ENCODE measurements at regions of chr14 and their contacts with region 1.

Region 1: GRCh38 chr14:103104654-103105452 is 10.3 kb downstream of the EXOC3L4 start:
- DNase-seq: peak; percentile 64
- H3K4me3 ChIP-seq: no peak overlapping the region
- H3K27ac ChIP-seq: no peak overlapping the region
- H3K4me1 ChIP-seq: peaks cover 12% of the 10 kb centered on the region
- H3K27me3 ChIP-seq: peaks cover 30% of the 10 kb centered on the region
- CTCF ChIP-seq: peak; percentile 100

Region 2: DNA sequence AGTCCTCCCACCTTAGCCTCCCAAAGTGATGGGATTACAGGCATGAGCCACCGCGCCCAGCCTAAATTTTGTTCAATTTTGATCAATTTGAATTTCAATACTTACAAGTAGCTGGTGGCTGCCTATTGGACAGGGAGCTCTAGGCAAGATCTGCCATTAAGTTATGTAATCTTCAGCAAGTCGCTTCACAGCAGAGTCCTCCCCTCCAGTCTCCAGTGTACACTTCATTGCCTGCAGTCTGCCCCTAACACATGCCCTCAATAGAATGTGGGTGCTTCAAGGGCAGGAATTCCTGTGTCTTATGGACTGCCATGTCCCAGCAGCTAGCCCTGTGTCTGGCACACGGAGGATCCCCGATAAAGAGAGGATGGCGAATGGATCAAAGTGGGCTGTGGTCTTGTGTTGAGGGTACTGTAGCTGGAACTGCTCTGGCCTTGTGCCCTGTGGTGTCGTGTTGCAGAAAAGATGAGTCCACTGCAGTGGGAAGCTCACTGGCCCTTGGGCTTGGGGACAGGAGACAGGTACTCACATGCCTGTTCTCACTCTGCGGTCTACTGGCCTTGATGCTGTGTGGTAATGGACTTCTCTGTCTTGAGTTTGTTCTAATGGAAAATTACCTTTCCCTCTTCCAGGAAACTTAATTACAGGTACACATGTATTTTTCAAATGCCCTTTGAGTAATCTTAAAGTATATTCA is 674.5 kb before region 1 on chr14:
- CTCF ChIA-PET with region 1: no interaction called
- POLR2A ChIA-PET with region 1: no interaction called
- intact Hi-C with region 1: no loop called
- DNase-seq: no peak
- H3K4me3 ChIP-seq: no peak overlapping the region
- H3K27ac ChIP-seq: no peak overlapping the region
- H3K4me1 ChIP-seq: no peaks in the 10 kb centered on the region
- H3K27me3 ChIP-seq: no peaks in the 10 kb centered on the region
- CTCF ChIP-seq: no peak

Region 3: GRCh38 chr14:103056322-103057027 is 48.4 kb before region 1 on chr14:
- CTCF ChIA-PET with region 1: no interaction called
- POLR2A ChIA-PET with region 1: interaction called, 12 read pairs
- intact Hi-C with region 1: no loop called
- DNase-seq: peak; percentile 92
- H3K4me3 ChIP-seq: peak overlapping the region; percentile 84
- H3K27ac ChIP-seq: peak overlapping the region; percentile 82
- H3K4me1 ChIP-seq: peaks cover 24% of the 10 kb centered on the region
- H3K27me3 ChIP-seq: no peaks in the 10 kb centered on the region
- CTCF ChIP-seq: no peak

Region 4: DNA sequence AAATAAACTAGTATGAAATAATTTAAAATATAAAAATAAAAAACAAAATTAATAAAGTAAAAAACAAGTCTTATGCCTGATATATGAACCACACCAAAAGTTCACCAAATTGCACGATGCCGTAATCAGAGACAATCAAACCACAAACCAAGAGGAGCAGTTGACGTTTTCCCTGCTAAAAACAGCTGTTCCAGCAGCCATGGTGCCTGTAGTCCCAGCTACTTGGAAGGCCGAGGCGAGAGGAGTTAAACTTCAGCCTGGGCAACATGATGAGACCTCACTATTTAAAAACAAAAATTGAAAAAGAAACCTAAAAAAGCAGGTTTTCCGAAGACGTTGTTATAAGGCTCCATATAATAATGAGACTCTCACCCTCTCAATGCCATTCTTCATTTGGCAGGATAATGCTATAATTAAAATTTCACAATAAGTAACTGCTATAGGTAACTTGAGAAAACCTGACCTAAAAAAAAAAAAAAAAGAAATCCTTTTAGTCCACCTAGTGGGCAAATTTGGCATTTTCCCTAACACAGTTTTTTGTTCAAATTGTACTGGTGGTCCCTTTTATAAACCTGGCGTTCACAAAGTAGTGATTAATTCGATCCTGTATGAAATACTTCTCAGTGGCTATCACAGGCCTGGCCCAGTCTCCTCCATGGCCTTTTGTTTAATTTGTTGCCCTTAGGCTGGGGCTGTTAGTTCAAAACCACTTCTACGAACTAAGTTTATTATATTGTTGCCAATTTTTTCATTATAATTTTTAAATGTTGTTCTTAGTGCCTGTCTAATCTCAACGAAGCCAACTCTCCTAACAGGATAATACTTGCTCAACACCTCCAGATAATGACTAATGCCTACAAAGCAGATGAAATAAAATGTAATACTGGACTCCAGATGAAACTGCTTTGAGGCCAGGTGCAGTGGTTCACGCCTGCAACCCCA is 80.5 kb after region 1 on chr14:
- CTCF ChIA-PET with region 1: interaction called, 5 read pairs
- POLR2A ChIA-PET with region 1: no interaction called
- intact Hi-C with region 1: loop called (anchors 2 kb)
- DNase-seq: peak; percentile 65
- H3K4me3 ChIP-seq: no peak overlapping the region
- H3K27ac ChIP-seq: no peak overlapping the region
- H3K4me1 ChIP-seq: no peaks in the 10 kb centered on the region
- H3K27me3 ChIP-seq: no peaks in the 10 kb centered on the region
- CTCF ChIP-seq: peak; percentile 76

Measured in A673 (cell line).